ENCODE measurements at regions of chr2 and their contacts with region 1.

Region 1: GRCh38 chr2:135531231-135532228 is at the start of gene R3HDM1:
- DNase-seq: peak; percentile 100
- ATAC-seq: peak; percentile 89
- H3K4me3 ChIP-seq: peak within 1 kb of the TSS; percentile 89
- H3K27ac ChIP-seq: peak within 1 kb of the TSS; percentile 99
- H3K4me1 ChIP-seq: peaks cover 3% of the 10 kb centered on the region; the same call in 1 of the 2 replicates
- H3K27me3 ChIP-seq: no peaks in the 10 kb centered on the region
- CTCF ChIP-seq: peak in 2 of 3 experiments; percentile 6 to 27; a peak in 1 of 6 replicates
- EP300 ChIP-seq: no peak
- POLR2A ChIP-seq: peak; percentile 76
- RAD21 ChIP-seq: peak; percentile 48
- polyA plus RNA-seq, gene R3HDM1: 16.8 to 16.9 TPM

Region 2: DNA sequence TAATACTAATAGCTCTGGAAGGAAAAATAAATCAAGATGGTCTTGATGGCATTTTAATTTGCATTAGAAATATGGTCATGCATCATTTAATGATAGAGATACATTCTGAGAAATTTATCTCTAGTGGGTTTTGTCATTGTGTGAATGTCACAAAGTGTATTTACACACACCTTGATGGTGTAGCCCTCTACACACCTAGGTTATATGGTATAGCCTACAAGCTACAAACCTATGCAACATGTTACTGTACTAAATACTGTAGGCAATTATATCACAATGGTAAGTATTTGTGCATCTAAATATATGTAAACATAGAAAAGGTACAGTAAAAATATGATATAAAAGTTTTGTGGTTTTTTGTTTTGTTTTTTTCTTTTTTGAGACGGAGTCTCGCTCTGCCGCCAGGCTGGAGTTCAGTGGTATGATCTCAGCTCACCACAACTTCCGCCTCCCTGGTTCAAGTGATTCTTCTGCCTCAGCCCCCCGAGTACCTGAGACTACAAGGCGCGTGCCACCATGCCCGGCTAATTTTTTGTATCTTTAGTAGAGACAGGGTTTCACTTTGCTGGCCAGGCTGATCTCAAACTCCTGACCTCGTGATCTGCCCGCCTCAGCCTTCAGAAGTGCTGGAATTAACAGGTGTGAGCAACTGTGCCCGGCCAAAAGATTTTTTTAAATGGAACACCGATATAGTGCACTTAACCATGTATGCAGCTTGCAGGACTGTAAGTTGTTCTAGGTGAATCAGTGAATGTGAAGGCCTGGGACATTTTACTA is 126.5 kb after region 1 on chr2:
- CTCF ChIA-PET with region 1: interaction called, 4 read pairs
- POLR2A ChIA-PET with region 1: no interaction called
- RAD21 ChIA-PET with region 1: interaction called, 7 read pairs
- SMC1A ChIA-PET with region 1: interaction called, 10 read pairs
- in situ Hi-C with region 1: no loop called
- intact Hi-C with region 1: no loop called
- DNase-seq: peak; percentile 38
- ATAC-seq: peak; percentile 96
- H3K4me3 ChIP-seq: peak overlapping the region; percentile 38; the same call in 1 of the 2 replicates
- H3K27ac ChIP-seq: peak overlapping the region; percentile 32
- H3K4me1 ChIP-seq: peaks cover 3% of the 10 kb centered on the region; the same call in 1 of the 2 replicates
- H3K27me3 ChIP-seq: no peaks in the 10 kb centered on the region
- CTCF ChIP-seq: no peak
- EP300 ChIP-seq: no peak
- POLR2A ChIP-seq: no peak
- RAD21 ChIP-seq: no peak

Region 3: DNA sequence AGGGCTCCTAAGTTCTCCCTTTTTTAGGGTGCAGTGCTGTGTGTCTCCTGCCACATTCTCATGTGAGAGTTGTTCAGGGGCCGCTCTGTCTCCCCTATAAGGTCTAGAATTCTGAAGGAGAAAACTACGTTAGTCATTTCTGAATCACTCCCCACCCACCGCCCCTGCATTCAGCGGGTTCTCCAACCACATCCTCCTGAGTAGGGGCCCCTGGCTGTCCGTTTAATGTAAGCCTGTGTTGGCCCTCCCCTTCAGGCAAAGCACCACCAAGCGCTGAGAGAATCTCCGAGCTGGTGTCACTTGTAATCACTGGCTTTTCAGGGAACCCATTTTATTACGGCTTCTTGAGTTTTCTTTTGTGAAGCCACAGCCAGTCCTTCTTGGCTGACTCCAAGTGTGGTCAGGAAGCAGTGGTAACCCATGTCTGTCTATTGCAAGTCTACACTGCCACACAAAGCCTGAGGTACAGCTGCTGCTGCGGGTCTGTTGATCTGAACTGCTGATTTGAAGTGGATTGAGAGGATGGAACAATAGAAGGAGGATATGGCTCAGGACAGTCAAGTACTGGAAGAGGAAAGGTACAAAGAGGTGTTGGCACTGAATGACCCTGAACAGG is 288.6 kb after region 1 on chr2:
- CTCF ChIA-PET with region 1: no interaction called
- POLR2A ChIA-PET with region 1: no interaction called
- RAD21 ChIA-PET with region 1: no interaction called
- SMC1A ChIA-PET with region 1: no interaction called
- in situ Hi-C with region 1: no loop called
- intact Hi-C with region 1: no loop called
- DNase-seq: peak; percentile 48
- ATAC-seq: peak; percentile 91
- H3K4me3 ChIP-seq: peak overlapping the region; percentile 63
- H3K27ac ChIP-seq: peak overlapping the region; percentile 93
- H3K4me1 ChIP-seq: peaks cover 37% of the 10 kb centered on the region
- H3K27me3 ChIP-seq: no peaks in the 10 kb centered on the region
- CTCF ChIP-seq: no peak
- EP300 ChIP-seq: 0 out of 4 replicates have a peak, but pooled peaks of 1 of the 2 experiments have one; percentile 18
- POLR2A ChIP-seq: peak; percentile 67
- RAD21 ChIP-seq: 0 out of 2 replicates have a peak, but pooled peaks have one; percentile 18

Measured in GM12878 (cell line).